Calu3 (cell line): ENCODE measurements at regions of chr2 and their contacts with region 1.

Region 1: GRCh38 chr2:673615-674320 is 3.4 kb downstream of the TMEM18 start:
- DNase-seq: no peak
- H3K4me3 Mint-ChIP-seq: no peak overlapping the region
- H3K27ac Mint-ChIP-seq: no peak overlapping the region
- H3K4me1 Mint-ChIP-seq: peaks cover 20% of the 10 kb centered on the region
- H3K27me3 Mint-ChIP-seq: no peaks in the 10 kb centered on the region
- CTCF ChIP-seq: no peak

Region 2: GRCh38 chr2:651951-652373 is 21.8 kb before region 1 on chr2:
- CTCF ChIA-PET with region 1: no interaction called
- intact Hi-C with region 1: loop called (anchors 1 kb)
- DNase-seq: no peak
- H3K4me3 Mint-ChIP-seq: no peak overlapping the region
- H3K27ac Mint-ChIP-seq: no peak overlapping the region
- H3K4me1 Mint-ChIP-seq: no peaks in the 10 kb centered on the region
- H3K27me3 Mint-ChIP-seq: peaks cover 18% of the 10 kb centered on the region
- CTCF ChIP-seq: no peak

Region 3: DNA sequence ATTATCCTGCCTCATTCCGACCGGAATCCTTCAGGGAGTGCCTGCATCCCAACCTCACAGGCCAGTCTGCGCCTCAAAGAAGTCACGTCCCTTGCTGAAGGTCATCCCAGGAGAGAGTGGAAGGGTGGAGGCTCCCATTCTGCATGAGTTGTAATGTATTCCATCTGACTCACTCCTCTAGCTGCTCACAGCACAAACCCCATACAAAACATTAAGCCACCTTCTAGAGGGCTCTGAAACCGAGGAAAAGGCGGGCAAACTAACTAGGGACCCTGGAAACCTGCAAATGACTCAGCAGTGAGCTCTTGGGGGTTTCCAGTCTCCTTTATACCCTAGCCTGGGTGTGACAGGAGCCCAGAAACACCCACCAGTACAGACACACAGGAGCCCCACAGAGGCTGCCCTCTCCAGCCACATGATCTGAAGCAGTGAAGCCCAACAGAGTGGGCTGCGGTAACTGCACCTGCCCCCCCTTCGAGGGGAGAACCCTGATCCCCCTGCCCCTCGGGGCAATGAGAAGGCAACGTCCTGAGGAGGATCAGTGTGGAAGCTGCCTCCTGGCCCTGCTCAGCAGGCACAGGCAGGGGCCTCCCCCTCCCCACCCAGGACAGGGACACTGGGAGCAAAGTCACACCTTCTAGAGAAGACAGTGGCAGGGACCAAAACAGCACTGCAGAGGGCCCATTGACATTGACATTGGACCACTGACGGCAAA is 207.6 kb after region 1 on chr2:
- CTCF ChIA-PET with region 1: no interaction called
- intact Hi-C with region 1: no loop called
- DNase-seq: no peak
- H3K4me3 Mint-ChIP-seq: no peak overlapping the region
- H3K27ac Mint-ChIP-seq: no peak overlapping the region
- H3K4me1 Mint-ChIP-seq: no peaks in the 10 kb centered on the region
- H3K27me3 Mint-ChIP-seq: no peaks in the 10 kb centered on the region
- CTCF ChIP-seq: no peak